CD8-positive, alpha-beta T cell (primary cell): ENCODE measurements at regions of chr17 and their contacts with region 1.

Region 1: GRCh38 chr17:7856883-7857723 is at the start of gene NAA38:
- DNase-seq: peak; percentile 87 to 99 (median 95)
- ATAC-seq: peak; percentile 81
- H3K4me3 ChIP-seq: peak within 1 kb of the TSS; percentile 88 to 98
- H3K4me3 Mint-ChIP-seq: no peak within 1 kb of the TSS
- H3K27ac ChIP-seq: peak within 1 kb of the TSS; percentile 93 to 94
- H3K27ac Mint-ChIP-seq: no peak within 1 kb of the TSS
- H3K4me1 ChIP-seq: peaks cover 28% of the 10 kb centered on the region
- H3K4me1 Mint-ChIP-seq: peaks cover 5% of the 10 kb centered on the region
- H3K27me3 ChIP-seq: no peaks in the 10 kb centered on the region
- H3K27me3 Mint-ChIP-seq: no peaks in the 10 kb centered on the region
- CTCF ChIP-seq: no peak
- total RNA-seq, gene NAA38: 14.3 to 16.5 TPM

Region 2: DNA sequence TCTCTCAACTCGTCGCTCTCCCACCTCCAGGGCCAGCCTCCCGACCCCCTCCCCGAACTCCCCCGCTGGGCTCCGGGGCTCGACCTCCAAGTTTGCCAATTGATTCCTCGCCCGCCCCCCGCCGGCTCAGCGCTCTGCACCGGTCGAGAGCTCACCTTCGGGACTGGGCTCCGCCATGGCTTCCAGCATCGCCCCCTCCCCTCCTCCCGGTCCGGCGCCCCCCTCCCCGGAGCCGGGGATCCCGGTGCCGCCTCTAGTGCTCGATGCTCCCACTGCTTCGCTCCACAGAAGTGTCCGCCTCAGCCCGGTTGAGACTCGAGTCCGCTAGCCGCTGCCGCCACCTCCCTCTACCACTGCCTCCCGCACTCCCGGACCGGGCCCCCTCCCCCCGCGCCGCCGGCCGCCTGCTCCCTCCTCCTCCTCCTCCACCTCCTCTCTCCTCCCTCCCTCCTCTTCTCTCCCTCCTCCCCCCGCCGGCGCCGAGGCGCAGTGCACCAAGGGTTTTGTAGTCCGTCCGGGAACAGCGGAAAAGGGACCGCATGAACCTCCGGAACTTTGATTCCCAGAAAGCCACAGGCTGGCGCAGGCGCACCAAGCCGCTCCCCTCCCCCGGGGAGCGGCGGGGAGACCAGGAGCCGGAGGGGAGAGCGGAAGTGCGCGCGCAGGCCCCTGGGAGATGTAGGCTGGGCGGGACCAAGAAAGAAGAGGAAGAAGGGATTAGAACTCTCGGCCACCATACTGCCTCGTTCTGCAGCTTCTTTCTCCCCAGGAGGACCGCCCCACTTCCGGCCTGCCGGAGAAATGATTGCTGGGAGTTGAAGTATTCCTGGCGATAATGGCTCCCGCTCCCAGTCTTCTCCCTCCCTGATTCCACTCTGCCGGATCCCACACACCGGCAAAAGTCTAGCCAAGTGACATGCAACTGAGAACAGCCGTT is 617.7 kb before region 1 on chr17 and contains the start of gene PHF23:
- CTCF ChIA-PET with region 1: no interaction called
- POLR2A ChIA-PET with region 1: interaction called, 4 read pairs
- intact Hi-C with region 1: loop called in 1 of 2 experiments (anchors 1 kb)
- DNase-seq: peak; percentile 93 to 99 (median 97)
- ATAC-seq: peak; percentile 64
- H3K4me3 ChIP-seq: peak within 1 kb of the TSS; percentile 87 to 90
- H3K4me3 Mint-ChIP-seq: peak within 1 kb of the TSS; percentile 98
- H3K27ac ChIP-seq: peak within 1 kb of the TSS; percentile 64 to 100
- H3K27ac Mint-ChIP-seq: peak within 1 kb of the TSS; percentile 90
- H3K4me1 ChIP-seq: peaks cover 37% of the 10 kb centered on the region
- H3K4me1 Mint-ChIP-seq: peaks cover 58% of the 10 kb centered on the region
- H3K27me3 ChIP-seq: no peaks in the 10 kb centered on the region
- H3K27me3 Mint-ChIP-seq: no peaks in the 10 kb centered on the region
- CTCF ChIP-seq: no peak
- total RNA-seq, gene PHF23: 2.8 to 3.1 TPM

Region 3: GRCh38 chr17:7844292-7845154 is 12.6 kb before region 1 on chr17:
- CTCF ChIA-PET with region 1: interaction called, 4 read pairs
- POLR2A ChIA-PET with region 1: interaction called, 15 read pairs
- intact Hi-C with region 1: loop called (anchors 1 kb)
- DNase-seq: peak; percentile 67 to 94 (median 79)
- ATAC-seq: peak; percentile 8
- H3K4me3 ChIP-seq: peak overlapping the region; percentile 94 to 98
- H3K4me3 Mint-ChIP-seq: peak overlapping the region; percentile 91
- H3K27ac ChIP-seq: peak overlapping the region; percentile 98 to 100
- H3K27ac Mint-ChIP-seq: peak overlapping the region; percentile 99
- H3K4me1 ChIP-seq: peaks cover 39% of the 10 kb centered on the region
- H3K4me1 Mint-ChIP-seq: peaks cover 33% of the 10 kb centered on the region
- H3K27me3 ChIP-seq: no peaks in the 10 kb centered on the region
- H3K27me3 Mint-ChIP-seq: no peaks in the 10 kb centered on the region
- CTCF ChIP-seq: no peak

Region 4: GRCh38 chr17:7887482-7888183 is 30.5 kb after region 1 on chr17:
- CTCF ChIA-PET with region 1: interaction called, 6 read pairs
- POLR2A ChIA-PET with region 1: interaction called, 4 read pairs
- intact Hi-C with region 1: loop called (anchors 1 kb)
- DNase-seq: peak; percentile 73 to 97 (median 87)
- ATAC-seq: peak; percentile 71
- H3K4me3 ChIP-seq: peak overlapping the region; percentile 86 to 89
- H3K4me3 Mint-ChIP-seq: no peak overlapping the region
- H3K27ac ChIP-seq: peak overlapping the region; percentile 61 to 80
- H3K27ac Mint-ChIP-seq: no peak overlapping the region
- H3K4me1 ChIP-seq: peaks cover 30% of the 10 kb centered on the region
- H3K4me1 Mint-ChIP-seq: peaks cover 13% of the 10 kb centered on the region
- H3K27me3 ChIP-seq: no peaks in the 10 kb centered on the region
- H3K27me3 Mint-ChIP-seq: no peaks in the 10 kb centered on the region
- CTCF ChIP-seq: no peak

Region 5: GRCh38 chr17:7915611-7916382 is 58.7 kb after region 1 on chr17 and contains the start of gene RNF227:
- CTCF ChIA-PET with region 1: interaction called, 28 read pairs
- POLR2A ChIA-PET with region 1: interaction called, 13 read pairs
- intact Hi-C with region 1: loop called in 1 of 2 experiments (anchors 1 kb)
- DNase-seq: peak; percentile 52 to 93 (median 80)
- ATAC-seq: peak; percentile 82
- H3K4me3 ChIP-seq: peak within 1 kb of the TSS; percentile 74 to 79
- H3K4me3 Mint-ChIP-seq: peak within 1 kb of the TSS; percentile 89
- H3K27ac ChIP-seq: peak within 1 kb of the TSS; percentile 67 to 80
- H3K27ac Mint-ChIP-seq: peak within 1 kb of the TSS; percentile 90
- H3K4me1 ChIP-seq: peaks cover 25% of the 10 kb centered on the region
- H3K4me1 Mint-ChIP-seq: peaks cover 28% of the 10 kb centered on the region
- H3K27me3 ChIP-seq: no peaks in the 10 kb centered on the region
- H3K27me3 Mint-ChIP-seq: no peaks in the 10 kb centered on the region
- CTCF ChIP-seq: no peak
- total RNA-seq, gene RNF227: 2.8 to 3.3 TPM

Region 6: GRCh38 chr17:7989781-7990655 is 132.9 kb after region 1 on chr17:
- CTCF ChIA-PET with region 1: interaction called, 178 read pairs
- POLR2A ChIA-PET with region 1: interaction called, 8 read pairs
- intact Hi-C with region 1: loop called (anchors 1 kb)
- DNase-seq: peak; percentile 85 to 99 (median 92)
- ATAC-seq: peak; percentile 96
- H3K4me3 ChIP-seq: peak overlapping the region; percentile 47 to 61
- H3K4me3 Mint-ChIP-seq: peak overlapping the region; percentile 77
- H3K27ac ChIP-seq: peak overlapping the region; percentile 51 to 61
- H3K27ac Mint-ChIP-seq: peak overlapping the region; percentile 86
- H3K4me1 ChIP-seq: peaks cover 13% of the 10 kb centered on the region
- H3K4me1 Mint-ChIP-seq: peaks cover 21% of the 10 kb centered on the region
- H3K27me3 ChIP-seq: no peaks in the 10 kb centered on the region
- H3K27me3 Mint-ChIP-seq: peaks cover under 1% of the 10 kb centered on the region
- CTCF ChIP-seq: peak; percentile 85

Region 7: DNA sequence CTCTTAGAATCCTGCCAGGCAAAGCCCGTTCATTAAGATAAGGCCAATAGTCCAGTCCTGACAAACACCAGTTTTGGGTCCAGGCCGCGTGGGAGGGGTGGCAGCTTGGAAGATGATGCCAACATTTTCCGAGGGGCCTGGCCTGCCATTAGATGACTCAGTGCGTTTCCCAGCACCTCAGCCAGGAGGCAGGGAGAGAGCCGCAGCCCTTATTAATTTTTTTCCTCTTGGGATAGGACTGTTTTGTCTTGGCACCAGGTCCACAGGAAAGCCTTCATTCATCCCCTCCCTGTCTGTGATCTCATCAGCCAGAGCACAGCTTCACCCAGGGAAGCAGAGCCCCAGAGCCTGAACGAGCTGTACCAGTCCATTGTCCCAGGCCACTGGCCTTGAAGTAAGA is 573.9 kb after region 1 on chr17:
- CTCF ChIA-PET with region 1: no interaction called
- POLR2A ChIA-PET with region 1: no interaction called
- intact Hi-C with region 1: no loop called
- DNase-seq: no peak
- ATAC-seq: no peak
- H3K4me3 ChIP-seq: no peak overlapping the region
- H3K4me3 Mint-ChIP-seq: no peak overlapping the region
- H3K27ac ChIP-seq: no peak overlapping the region
- H3K27ac Mint-ChIP-seq: no peak overlapping the region
- H3K4me1 ChIP-seq: peaks cover 4% of the 10 kb centered on the region
- H3K4me1 Mint-ChIP-seq: peaks cover 6% of the 10 kb centered on the region
- H3K27me3 ChIP-seq: no peaks in the 10 kb centered on the region
- H3K27me3 Mint-ChIP-seq: no peaks in the 10 kb centered on the region
- CTCF ChIP-seq: no peak